Posterior vena cava (tissue), 2 donors: ENCODE measurements at regions of chr7 and their contacts with region 1.

Region 1: DNA sequence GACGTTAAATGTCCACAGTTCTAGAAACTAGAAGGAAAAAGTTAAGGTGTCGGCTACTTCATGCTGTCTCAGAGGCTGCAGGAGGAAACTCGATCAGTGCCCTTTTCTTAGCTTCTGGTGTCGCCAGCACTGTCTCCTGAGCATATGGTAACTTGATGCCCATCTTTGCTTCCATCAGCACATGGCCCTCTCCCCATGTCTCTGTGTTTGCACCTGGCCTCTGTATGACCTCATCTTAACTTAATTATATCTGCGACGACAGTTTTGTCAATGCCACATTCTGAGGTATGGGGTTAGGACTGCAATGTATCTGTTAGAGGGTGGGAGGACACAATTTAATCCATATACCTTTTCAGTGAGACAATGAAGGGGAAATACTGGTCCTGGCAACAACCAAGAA is 449.9 kb downstream of the POM121L12 start:
- DNase-seq: no peak

Region 2: GRCh38 chr7:53500076-53500475 is 14.7 kb after region 1 on chr7:
- intact Hi-C with region 1: no loop called
- DNase-seq: no peak

Region 3: GRCh38 chr7:53518319-53518718 is 33.0 kb after region 1 on chr7:
- intact Hi-C with region 1: loop called in 1 of 2 experiments (anchors 2 kb)
- DNase-seq: no peak